Caco-2 (cell line): ENCODE measurements at regions of chr6 and their contacts with region 1.

Region 1: GRCh38 chr6:129730477-129731165 is 20.6 kb upstream of the ARHGAP18 start:
- DNase-seq: peak in 1 of 2 experiments; percentile 44
- H3K4me3 ChIP-seq: no peak overlapping the region
- H3K4me3 Mint-ChIP-seq: peak overlapping the region; percentile 24
- H3K27ac Mint-ChIP-seq: peak overlapping the region; percentile 14
- H3K4me1 ChIP-seq: peaks cover 24% of the 10 kb centered on the region
- H3K4me1 Mint-ChIP-seq: peaks cover 25% of the 10 kb centered on the region
- H3K27me3 ChIP-seq: no peaks in the 10 kb centered on the region
- H3K27me3 Mint-ChIP-seq: no peaks in the 10 kb centered on the region
- CTCF ChIP-seq: peak; percentile 65 to 71

Region 2: GRCh38 chr6:129598244-129599187 is 132.1 kb before region 1 on chr6:
- CTCF ChIA-PET with region 1: interaction called, 12 read pairs
- POLR2A ChIA-PET with region 1: no interaction called
- intact Hi-C with region 1: loop called (anchors 1 kb)
- DNase-seq: peak in 1 of 2 experiments; percentile 60
- H3K4me3 ChIP-seq: no peak overlapping the region
- H3K4me3 Mint-ChIP-seq: no peak overlapping the region
- H3K27ac Mint-ChIP-seq: no peak overlapping the region
- H3K4me1 ChIP-seq: peaks cover 6% of the 10 kb centered on the region
- H3K4me1 Mint-ChIP-seq: no peaks in the 10 kb centered on the region
- H3K27me3 ChIP-seq: no peaks in the 10 kb centered on the region
- H3K27me3 Mint-ChIP-seq: no peaks in the 10 kb centered on the region
- CTCF ChIP-seq: peak; percentile 61

Region 3: DNA sequence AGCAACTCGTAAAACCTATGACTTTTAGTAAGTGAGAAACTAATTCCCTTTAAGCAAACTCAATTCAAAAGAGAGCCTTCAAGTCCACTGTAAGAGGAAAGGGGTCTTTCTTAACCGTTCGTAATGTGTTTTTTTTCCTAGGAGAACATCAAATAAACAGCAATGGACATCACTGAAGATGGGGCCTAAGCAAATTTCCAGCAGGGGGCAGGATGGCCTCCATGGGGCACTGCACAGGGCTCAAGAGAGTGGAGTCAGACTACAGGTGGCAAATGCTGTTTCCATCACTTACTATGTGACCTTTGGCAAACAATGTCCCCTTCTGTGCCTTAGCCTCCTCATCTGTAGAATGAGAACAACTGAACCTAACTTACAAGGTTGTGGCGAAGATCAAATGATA is 109.4 kb before region 1 on chr6:
- CTCF ChIA-PET with region 1: no interaction called
- POLR2A ChIA-PET with region 1: no interaction called
- intact Hi-C with region 1: loop called (anchors 1 kb)
- DNase-seq: peak in 1 of 2 experiments; percentile 34
- H3K4me3 ChIP-seq: no peak overlapping the region
- H3K4me3 Mint-ChIP-seq: no peak overlapping the region
- H3K27ac Mint-ChIP-seq: no peak overlapping the region
- H3K4me1 ChIP-seq: no peaks in the 10 kb centered on the region
- H3K4me1 Mint-ChIP-seq: no peaks in the 10 kb centered on the region
- H3K27me3 ChIP-seq: no peaks in the 10 kb centered on the region
- H3K27me3 Mint-ChIP-seq: no peaks in the 10 kb centered on the region
- CTCF ChIP-seq: peak in 1 of 2 experiments; percentile 28

Region 4: GRCh38 chr6:129671442-129672340 is 58.9 kb before region 1 on chr6:
- CTCF ChIA-PET with region 1: no interaction called
- POLR2A ChIA-PET with region 1: no interaction called
- intact Hi-C with region 1: loop called (anchors 1 kb)
- DNase-seq: peak in 1 of 2 experiments; percentile 30
- H3K4me3 ChIP-seq: no peak overlapping the region
- H3K4me3 Mint-ChIP-seq: no peak overlapping the region
- H3K27ac Mint-ChIP-seq: peak overlapping the region; percentile 73
- H3K4me1 ChIP-seq: peaks cover 34% of the 10 kb centered on the region
- H3K4me1 Mint-ChIP-seq: peaks cover 38% of the 10 kb centered on the region
- H3K27me3 ChIP-seq: no peaks in the 10 kb centered on the region
- H3K27me3 Mint-ChIP-seq: no peaks in the 10 kb centered on the region
- CTCF ChIP-seq: no peak

Region 5: GRCh38 chr6:129709769-129710449 is 20.7 kb before region 1 on chr6 and contains the start of gene ARHGAP18:
- CTCF ChIA-PET with region 1: interaction called, 15 read pairs
- POLR2A ChIA-PET with region 1: no interaction called
- intact Hi-C with region 1: loop called (anchors 1 kb)
- DNase-seq: peak; percentile 94 to 95
- H3K4me3 ChIP-seq: peak within 1 kb of the TSS; percentile 68
- H3K4me3 Mint-ChIP-seq: peak within 1 kb of the TSS; percentile 84
- H3K27ac Mint-ChIP-seq: peak within 1 kb of the TSS; percentile 84
- H3K4me1 ChIP-seq: peaks cover 13% of the 10 kb centered on the region
- H3K4me1 Mint-ChIP-seq: peaks cover 29% of the 10 kb centered on the region
- H3K27me3 ChIP-seq: no peaks in the 10 kb centered on the region
- H3K27me3 Mint-ChIP-seq: no peaks in the 10 kb centered on the region
- CTCF ChIP-seq: no peak
- total RNA-seq, gene ARHGAP18: 15.0 and 15.6 TPM in 2 replicates

Region 6: GRCh38 chr6:130020907-130021629 is 290.4 kb after region 1 on chr6:
- CTCF ChIA-PET with region 1: interaction called, 7 read pairs
- POLR2A ChIA-PET with region 1: no interaction called
- intact Hi-C with region 1: loop called (anchors 1 kb)
- DNase-seq: peak; percentile 77 to 82
- H3K4me3 ChIP-seq: peak overlapping the region; percentile 80
- H3K4me3 Mint-ChIP-seq: peak overlapping the region; percentile 83
- H3K27ac Mint-ChIP-seq: peak overlapping the region; percentile 50
- H3K4me1 ChIP-seq: peaks cover 8% of the 10 kb centered on the region; the same call in 1 of the 2 replicates
- H3K4me1 Mint-ChIP-seq: no peaks in the 10 kb centered on the region
- H3K27me3 ChIP-seq: no peaks in the 10 kb centered on the region
- H3K27me3 Mint-ChIP-seq: no peaks in the 10 kb centered on the region
- CTCF ChIP-seq: peak; percentile 73 to 76